ENCODE measurements at regions of chr1 and their contacts with region 1.

Region 1: GRCh38 chr1:161201828-161202725 is at the start of gene NDUFS2:
- DNase-seq: peak; percentile 91 to 98 (median 94)
- H3K4me3 ChIP-seq: peak within 1 kb of the TSS; percentile 85 to 98
- H3K4me3 Mint-ChIP-seq: peak within 1 kb of the TSS; percentile 95 to 98 (median 96)
- H3K27ac ChIP-seq: peak within 1 kb of the TSS; percentile 96
- H3K27ac Mint-ChIP-seq: peak within 1 kb of the TSS; percentile 94 to 99 (median 99)
- H3K4me1 ChIP-seq: peaks cover 66% of the 10 kb centered on the region
- H3K4me1 Mint-ChIP-seq: peaks cover 32 to 68% (median 56%) of the 10 kb centered on the region in 4 donors
- H3K27me3 ChIP-seq: no peaks in the 10 kb centered on the region
- H3K27me3 Mint-ChIP-seq: peaks cover 0 to 1% of the 10 kb centered on the region in 2 donors
- total RNA-seq, gene NDUFS2: 89.9 to 100 TPM

Region 2: GRCh38 chr1:161054805-161055204 is 147.3 kb before region 1 on chr1:
- CTCF ChIA-PET with region 1: no interaction called
- POLR2A ChIA-PET with region 1: no interaction called
- intact Hi-C with region 1: no loop called
- DNase-seq: no peak
- H3K4me3 ChIP-seq: no peak overlapping the region
- H3K4me3 Mint-ChIP-seq: no peak overlapping the region
- H3K27ac ChIP-seq: no peak overlapping the region
- H3K27ac Mint-ChIP-seq: peak overlapping the region in 3 of 7 donors; percentile 17 to 24 (median 18)
- H3K4me1 ChIP-seq: peaks cover 31% of the 10 kb centered on the region
- H3K4me1 Mint-ChIP-seq: peaks cover 14 to 43% (median 24%) of the 10 kb centered on the region in 4 donors
- H3K27me3 ChIP-seq: no peaks in the 10 kb centered on the region
- H3K27me3 Mint-ChIP-seq: no peaks in the 10 kb centered on the region

Region 3: GRCh38 chr1:161132410-161133219 is 69.5 kb before region 1 on chr1 and contains the start of gene DEDD:
- CTCF ChIA-PET with region 1: no interaction called
- POLR2A ChIA-PET with region 1: interaction called, 20 read pairs
- intact Hi-C with region 1: no loop called
- DNase-seq: peak; percentile 92 to 95 (median 93)
- H3K4me3 ChIP-seq: peak within 1 kb of the TSS; percentile 80 to 100
- H3K4me3 Mint-ChIP-seq: peak within 1 kb of the TSS in 1 of 8 donors; percentile 91
- H3K27ac ChIP-seq: peak within 1 kb of the TSS; percentile 95
- H3K27ac Mint-ChIP-seq: peak within 1 kb of the TSS in 3 of 7 donors; percentile 91 to 99 (median 95)
- H3K4me1 ChIP-seq: peaks cover 51% of the 10 kb centered on the region
- H3K4me1 Mint-ChIP-seq: peaks cover 29 to 43% (median 40%) of the 10 kb centered on the region in 4 donors
- H3K27me3 ChIP-seq: no peaks in the 10 kb centered on the region
- H3K27me3 Mint-ChIP-seq: no peaks in the 10 kb centered on the region
- total RNA-seq, gene DEDD: 39.1 to 41.4 TPM

Region 4: GRCh38 chr1:161159087-161159912 is 42.8 kb before region 1 on chr1 and contains the start of gene USP21:
- CTCF ChIA-PET with region 1: interaction called, 45 read pairs
- POLR2A ChIA-PET with region 1: interaction called, 34 read pairs
- intact Hi-C with region 1: no loop called
- DNase-seq: peak; percentile 91 to 92 (median 92)
- H3K4me3 ChIP-seq: peak within 1 kb of the TSS; percentile 83 to 93
- H3K4me3 Mint-ChIP-seq: peak within 1 kb of the TSS; percentile 91 to 99 (median 94)
- H3K27ac ChIP-seq: peak within 1 kb of the TSS; percentile 84
- H3K27ac Mint-ChIP-seq: peak within 1 kb of the TSS; percentile 94 to 99 (median 97)
- H3K4me1 ChIP-seq: peaks cover 45% of the 10 kb centered on the region
- H3K4me1 Mint-ChIP-seq: peaks cover 40 to 77% (median 61%) of the 10 kb centered on the region in 4 donors
- H3K27me3 ChIP-seq: no peaks in the 10 kb centered on the region
- H3K27me3 Mint-ChIP-seq: no peaks in the 10 kb centered on the region
- total RNA-seq, gene USP21: 62.0 to 63.6 TPM

Region 5: DNA sequence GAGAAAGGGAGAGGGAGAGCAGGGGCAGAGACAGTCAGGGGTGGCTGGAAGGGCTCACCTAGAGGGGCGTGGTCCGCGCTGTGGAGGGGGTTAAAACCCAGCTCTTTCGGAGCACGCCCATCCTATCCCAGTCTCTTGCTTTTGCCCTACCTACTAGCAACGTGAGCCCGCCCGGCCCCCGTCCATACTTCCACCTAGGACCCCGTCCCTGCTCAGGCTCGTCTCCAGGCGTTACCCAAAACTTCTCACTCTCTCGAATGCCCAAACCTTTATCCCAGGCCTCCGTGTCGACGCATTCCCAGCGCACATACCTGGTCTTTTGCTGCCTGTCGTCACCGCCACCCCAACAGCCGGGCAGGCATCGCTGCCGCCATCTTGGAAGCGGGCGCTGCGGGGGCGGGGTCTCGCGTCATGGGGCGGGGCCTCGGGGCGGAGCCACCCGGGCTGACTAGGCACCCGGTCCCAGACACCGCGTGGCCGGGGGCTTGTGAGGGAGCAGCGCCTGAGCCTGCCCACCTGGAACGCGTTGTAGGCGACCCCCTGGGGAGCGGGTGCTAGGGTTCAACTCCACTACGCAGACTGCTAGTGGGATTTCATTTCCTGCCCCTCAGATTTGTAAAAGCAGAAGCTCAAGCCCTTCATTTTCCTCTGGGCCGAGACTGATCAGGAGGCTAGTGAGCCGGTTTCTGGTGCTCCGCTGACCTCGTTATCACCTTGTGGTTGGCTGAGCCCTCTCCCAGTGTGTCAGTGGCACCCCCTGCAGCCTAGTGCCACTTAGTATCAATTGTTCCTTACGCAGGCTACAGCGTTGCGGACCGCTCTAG is 24.8 kb before region 1 on chr1 and contains the start of gene B4GALT3:
- CTCF ChIA-PET with region 1: interaction called, 53 read pairs
- POLR2A ChIA-PET with region 1: interaction called, 77 read pairs
- intact Hi-C with region 1: loop called (anchors 1 kb)
- DNase-seq: peak; percentile 89 to 94 (median 90)
- H3K4me3 ChIP-seq: peak within 1 kb of the TSS; percentile 90 to 97
- H3K4me3 Mint-ChIP-seq: peak within 1 kb of the TSS; percentile 98 to 100 (median 100)
- H3K27ac ChIP-seq: peak within 1 kb of the TSS; percentile 85
- H3K27ac Mint-ChIP-seq: peak within 1 kb of the TSS; percentile 95 to 100 (median 99)
- H3K4me1 ChIP-seq: peaks cover 56% of the 10 kb centered on the region
- H3K4me1 Mint-ChIP-seq: peaks cover 45 to 85% (median 68%) of the 10 kb centered on the region in 4 donors
- H3K27me3 ChIP-seq: no peaks in the 10 kb centered on the region
- H3K27me3 Mint-ChIP-seq: no peaks in the 10 kb centered on the region
- total RNA-seq, gene B4GALT3: 64.6 to 71.5 TPM

Region 6: GRCh38 chr1:161216945-161217712 is 15.1 kb after region 1 on chr1:
- CTCF ChIA-PET with region 1: interaction called, 131 read pairs
- POLR2A ChIA-PET with region 1: interaction called, 27 read pairs
- intact Hi-C with region 1: no loop called
- DNase-seq: no peak
- H3K4me3 ChIP-seq: no peak overlapping the region
- H3K4me3 Mint-ChIP-seq: no peak overlapping the region
- H3K27ac ChIP-seq: no peak overlapping the region
- H3K27ac Mint-ChIP-seq: peak overlapping the region in 5 of 7 donors; percentile 4 to 67 (median 12)
- H3K4me1 ChIP-seq: peaks cover 13% of the 10 kb centered on the region
- H3K4me1 Mint-ChIP-seq: peaks cover 9 to 37% (median 29%) of the 10 kb centered on the region in 4 donors
- H3K27me3 ChIP-seq: no peaks in the 10 kb centered on the region
- H3K27me3 Mint-ChIP-seq: no peaks in the 10 kb centered on the region

Region 7: GRCh38 chr1:161314201-161314981 is 112.3 kb after region 1 on chr1 and contains the start of gene SDHC:
- CTCF ChIA-PET with region 1: interaction called, 6 read pairs
- POLR2A ChIA-PET with region 1: interaction called, 18 read pairs
- intact Hi-C with region 1: no loop called
- DNase-seq: peak; percentile 91 to 94 (median 92)
- H3K4me3 ChIP-seq: peak within 1 kb of the TSS; percentile 91 to 94
- H3K4me3 Mint-ChIP-seq: peak within 1 kb of the TSS; percentile 95 to 99 (median 98)
- H3K27ac ChIP-seq: peak within 1 kb of the TSS; percentile 98
- H3K27ac Mint-ChIP-seq: peak within 1 kb of the TSS; percentile 97 to 100 (median 99)
- H3K4me1 ChIP-seq: peaks cover 16% of the 10 kb centered on the region
- H3K4me1 Mint-ChIP-seq: peaks cover 15 to 38% (median 22%) of the 10 kb centered on the region in 4 donors
- H3K27me3 ChIP-seq: no peaks in the 10 kb centered on the region
- H3K27me3 Mint-ChIP-seq: no peaks in the 10 kb centered on the region
- total RNA-seq, gene SDHC: 106 to 108 TPM